Lower leg skin (tissue), 4 donors: ENCODE measurements at regions of chr22 and their contacts with region 1.

Region 1: DNA sequence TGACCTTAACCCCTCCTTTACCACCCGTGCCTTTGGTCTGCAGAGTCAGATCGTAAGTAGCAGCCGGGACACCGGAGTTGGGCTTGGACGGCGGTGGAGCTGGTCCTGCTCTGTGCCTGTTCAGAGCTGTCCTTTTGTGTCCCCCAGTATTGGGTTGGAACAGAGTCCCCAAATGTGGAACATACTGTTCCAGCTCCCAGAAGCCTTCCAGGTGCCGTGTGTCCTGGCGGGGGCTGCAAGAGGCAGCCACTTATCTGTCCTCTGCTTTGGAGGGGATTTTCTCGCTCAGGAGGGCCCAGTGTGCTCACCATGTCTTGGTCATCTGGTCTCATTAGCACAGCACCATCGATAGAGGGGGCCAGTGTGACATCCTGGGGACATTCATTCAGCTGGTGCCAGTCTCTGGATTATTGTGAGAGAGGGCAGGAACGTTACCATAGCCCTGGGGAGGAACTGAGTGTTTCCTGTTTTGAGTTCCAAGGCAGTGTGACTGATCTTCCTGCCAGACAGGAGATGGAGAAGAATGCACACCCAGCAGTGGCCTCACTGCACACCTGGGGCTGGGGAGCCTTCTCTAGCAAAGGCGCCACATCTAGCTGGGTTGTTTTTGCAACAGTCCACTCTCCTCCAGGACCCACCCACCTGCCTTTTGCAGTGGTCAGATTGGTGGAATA is 12.4 kb downstream of the CRELD2 start:
- DNase-seq: peak in 1 of 2 donors; percentile 76
- H3K4me3 ChIP-seq: no peak overlapping the region
- CTCF ChIP-seq: no peak
- POLR2A ChIP-seq: no peak

Region 2: GRCh38 chr22:49894322-49895054 is 36.4 kb before region 1 on chr22:
- intact Hi-C with region 1: no loop called
- DNase-seq: no peak
- H3K4me3 ChIP-seq: no peak overlapping the region
- CTCF ChIP-seq: no peak
- POLR2A ChIP-seq: no peak

Region 3: DNA sequence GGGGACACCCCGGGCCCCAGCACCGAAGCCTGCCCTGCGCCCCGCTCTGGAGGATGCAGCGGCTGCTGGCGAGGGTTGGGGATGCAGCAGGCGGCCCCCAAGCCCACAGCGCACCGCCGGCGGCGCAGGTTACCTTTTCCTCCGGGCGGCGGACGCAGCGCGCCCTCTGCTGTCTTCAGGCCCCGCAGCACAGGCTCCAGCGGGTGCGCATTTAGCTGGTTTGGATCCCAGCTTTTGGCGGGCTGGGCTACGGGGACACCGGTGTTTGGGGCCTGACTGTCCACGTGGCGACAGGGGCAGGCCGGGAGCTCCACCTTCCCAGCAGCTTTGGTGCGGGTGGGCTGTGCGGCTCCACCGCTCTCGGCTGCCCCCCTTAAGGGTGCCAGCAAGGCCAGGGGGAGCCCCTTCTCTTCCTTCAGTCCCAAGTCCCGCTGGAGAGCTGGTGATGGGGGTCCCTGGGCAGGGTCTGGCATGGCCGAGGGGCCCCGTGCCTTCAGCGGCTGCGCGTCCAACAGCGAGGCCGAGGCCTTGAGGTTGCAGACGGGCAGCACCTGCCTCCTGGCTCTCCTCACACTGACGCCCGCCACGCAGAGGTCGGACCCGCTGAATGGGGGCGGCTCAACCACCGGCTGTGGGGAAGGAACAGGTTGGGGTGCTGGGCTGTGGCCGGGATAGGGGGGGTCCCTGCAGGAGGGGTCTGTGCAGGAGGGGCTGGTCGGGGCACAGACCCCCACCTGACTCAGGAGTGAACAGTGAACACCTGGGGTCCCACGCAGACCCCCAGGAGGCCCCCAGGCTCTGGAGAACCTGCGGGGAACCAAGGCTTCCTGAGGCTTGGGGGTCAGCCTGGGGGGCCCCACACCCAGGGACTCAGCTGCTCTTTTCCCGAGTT is 99.7 kb after region 1 on chr22:
- intact Hi-C with region 1: loop called (anchors 2 kb)
- DNase-seq: peak; percentile 46 to 93
- H3K4me3 ChIP-seq: no peak overlapping the region
- CTCF ChIP-seq: peak in 1 of 3 donors; percentile 67
- POLR2A ChIP-seq: no peak